ENCODE measurements at regions of chr7 and their contacts with region 1.

Region 1: DNA sequence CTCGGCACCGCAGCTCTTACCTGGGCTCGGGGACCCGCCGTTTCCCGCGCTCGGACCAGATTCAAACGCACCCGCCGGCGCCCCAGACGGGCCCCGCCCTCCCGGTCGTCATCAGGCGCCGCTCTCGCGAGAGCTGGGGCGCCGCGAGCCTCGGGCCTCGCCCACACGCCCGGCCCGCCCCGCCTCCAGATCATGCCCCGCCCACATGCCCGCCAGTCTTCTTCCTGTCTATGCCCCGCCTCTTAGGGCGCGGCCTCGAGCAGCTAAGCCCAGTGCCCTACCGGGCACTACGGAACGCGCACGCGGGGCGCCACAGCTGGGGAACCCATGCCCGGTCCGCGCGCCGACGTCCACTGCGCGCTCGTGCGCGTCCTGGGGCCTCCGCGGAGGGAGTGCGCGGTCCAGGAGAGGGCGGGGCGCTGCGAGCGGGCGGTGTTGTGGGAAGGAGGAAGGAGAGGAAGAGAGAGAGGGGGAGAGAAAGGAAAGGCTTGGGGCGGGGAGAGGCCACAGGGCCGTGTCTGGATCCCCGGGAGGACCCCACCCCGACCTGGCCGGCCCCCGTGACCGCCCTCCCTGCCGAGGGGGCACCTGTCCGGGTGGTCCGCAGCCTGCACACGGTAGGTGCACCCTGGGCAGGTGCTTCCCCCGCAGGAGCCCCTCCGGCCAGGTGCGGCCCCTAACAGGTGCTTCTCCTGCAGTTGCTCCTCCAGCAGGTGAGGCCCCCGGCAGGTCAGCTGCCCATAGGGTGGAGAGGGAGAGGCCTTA is at the start of gene NCAPG2:
- DNase-seq: peak; percentile 99 to 100 (median 100)
- ATAC-seq: peak; percentile 94
- H3K4me3 ChIP-seq: peak within 1 kb of the TSS; percentile 83
- H3K27ac ChIP-seq: peak within 1 kb of the TSS; percentile 96
- H3K4me1 ChIP-seq: peaks cover 31 to 37% of the 10 kb centered on the region in 2 experiments
- H3K27me3 ChIP-seq: no peaks in the 10 kb centered on the region
- CTCF ChIP-seq: peak in 1 of 3 experiments; percentile 30; a peak in 1 of 6 replicates
- EP300 ChIP-seq: no peak
- POLR2A ChIP-seq: peak; percentile 96
- RAD21 ChIP-seq: no peak; a peak in 1 of 4 replicates
- polyA plus RNA-seq, gene NCAPG2: 21.5 to 97.7 TPM

Region 2: DNA sequence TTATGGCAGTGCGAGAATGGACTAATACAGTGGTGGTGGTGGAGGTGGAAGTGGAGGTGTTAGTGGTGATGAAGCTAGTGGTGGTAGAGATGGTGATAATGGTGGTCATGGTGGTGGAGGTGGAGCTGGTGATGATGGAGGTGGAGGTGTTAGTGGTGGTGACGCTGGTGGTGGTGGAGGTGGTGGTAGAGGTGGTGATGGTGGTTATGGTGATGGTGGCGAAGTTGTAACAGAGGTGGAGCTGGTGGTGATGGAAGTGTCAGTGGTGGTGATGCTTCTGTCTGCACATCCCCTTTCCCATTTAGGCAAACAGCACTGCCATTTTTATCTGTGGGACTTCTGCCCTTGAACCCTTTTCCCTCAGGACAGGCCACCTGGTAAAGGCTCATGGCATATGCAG is 109.8 kb before region 1 on chr7:
- CTCF ChIA-PET with region 1: no interaction called
- POLR2A ChIA-PET with region 1: no interaction called
- in situ Hi-C with region 1: no loop called
- intact Hi-C with region 1: no loop called
- DNase-seq: no peak
- ATAC-seq: no peak
- H3K4me3 ChIP-seq: no peak overlapping the region
- H3K27ac ChIP-seq: no peak overlapping the region
- H3K4me1 ChIP-seq: no peaks in the 10 kb centered on the region
- H3K27me3 ChIP-seq: peaks cover 14 to 25% of the 10 kb centered on the region in 2 experiments; a peak in 4 of 5 replicates
- CTCF ChIP-seq: no peak
- EP300 ChIP-seq: no peak
- POLR2A ChIP-seq: no peak
- RAD21 ChIP-seq: no peak

Region 3: GRCh38 chr7:158609313-158609974 is 95.4 kb before region 1 on chr7:
- CTCF ChIA-PET with region 1: no interaction called
- POLR2A ChIA-PET with region 1: no interaction called
- in situ Hi-C with region 1: no loop called
- intact Hi-C with region 1: no loop called
- DNase-seq: peak in 2 of 4 experiments; percentile 42 to 50
- ATAC-seq: peak; percentile 17; the same call in 2 of the 3 replicates
- H3K4me3 ChIP-seq: no peak overlapping the region
- H3K27ac ChIP-seq: no peak overlapping the region
- H3K4me1 ChIP-seq: peaks cover 0 to under 1% of the 10 kb centered on the region in 2 experiments; a peak in 1 of 5 replicates
- H3K27me3 ChIP-seq: no peaks in the 10 kb centered on the region
- CTCF ChIP-seq: no peak
- EP300 ChIP-seq: no peak
- POLR2A ChIP-seq: no peak; the same call in 1 of the 2 replicates
- RAD21 ChIP-seq: no peak

Region 4: GRCh38 chr7:158655931-158656441 is 48.9 kb before region 1 on chr7:
- CTCF ChIA-PET with region 1: no interaction called
- POLR2A ChIA-PET with region 1: no interaction called
- in situ Hi-C with region 1: no loop called
- intact Hi-C with region 1: no loop called
- DNase-seq: no peak
- ATAC-seq: 0 out of 3 replicates have a peak, but pooled peaks have one; percentile 9
- H3K4me3 ChIP-seq: no peak overlapping the region
- H3K27ac ChIP-seq: no peak overlapping the region
- H3K4me1 ChIP-seq: peaks cover 0 to 3% of the 10 kb centered on the region in 2 experiments; a peak in 1 of 5 replicates
- H3K27me3 ChIP-seq: no peaks in the 10 kb centered on the region
- CTCF ChIP-seq: no peak
- EP300 ChIP-seq: no peak
- POLR2A ChIP-seq: no peak
- RAD21 ChIP-seq: no peak

Region 5: GRCh38 chr7:158685693-158686092 is 19.2 kb before region 1 on chr7:
- CTCF ChIA-PET with region 1: no interaction called
- POLR2A ChIA-PET with region 1: interaction called, 16 read pairs
- in situ Hi-C with region 1: no loop called
- intact Hi-C with region 1: no loop called
- DNase-seq: no peak
- ATAC-seq: no peak
- H3K4me3 ChIP-seq: no peak overlapping the region
- H3K27ac ChIP-seq: no peak overlapping the region
- H3K4me1 ChIP-seq: no peaks in the 10 kb centered on the region
- H3K27me3 ChIP-seq: no peaks in the 10 kb centered on the region
- CTCF ChIP-seq: no peak
- EP300 ChIP-seq: no peak
- POLR2A ChIP-seq: no peak
- RAD21 ChIP-seq: no peak

Region 6: GRCh38 chr7:158723266-158723665 is 18.4 kb after region 1 on chr7:
- CTCF ChIA-PET with region 1: no interaction called
- POLR2A ChIA-PET with region 1: interaction called, 11 read pairs
- in situ Hi-C with region 1: no loop called
- intact Hi-C with region 1: no loop called
- DNase-seq: no peak
- ATAC-seq: peak; percentile 9; the same call in 1 of the 3 replicates
- H3K4me3 ChIP-seq: no peak overlapping the region
- H3K27ac ChIP-seq: no peak overlapping the region
- H3K4me1 ChIP-seq: peaks cover 4 to 5% of the 10 kb centered on the region in 2 experiments; a peak in 4 of 5 replicates
- H3K27me3 ChIP-seq: peaks cover 0 to 5% of the 10 kb centered on the region in 2 experiments; a peak in 1 of 5 replicates
- CTCF ChIP-seq: no peak
- EP300 ChIP-seq: no peak
- POLR2A ChIP-seq: no peak
- RAD21 ChIP-seq: no peak

Region 7: GRCh38 chr7:158740013-158740656 is 35.2 kb after region 1 on chr7:
- CTCF ChIA-PET with region 1: no interaction called
- POLR2A ChIA-PET with region 1: interaction called, 4 read pairs
- in situ Hi-C with region 1: no loop called
- intact Hi-C with region 1: loop called (anchors 5 kb)
- DNase-seq: peak in 2 of 4 experiments; percentile 48 to 58
- ATAC-seq: peak; percentile 47
- H3K4me3 ChIP-seq: no peak overlapping the region
- H3K27ac ChIP-seq: peak overlapping the region; percentile 71
- H3K4me1 ChIP-seq: peaks cover 22 to 32% of the 10 kb centered on the region in 2 experiments; a peak in 4 of 5 replicates
- H3K27me3 ChIP-seq: no peaks in the 10 kb centered on the region
- CTCF ChIP-seq: peak in 1 of 3 experiments; percentile 8; a peak in 1 of 6 replicates
- EP300 ChIP-seq: no peak
- POLR2A ChIP-seq: no peak
- RAD21 ChIP-seq: peak; percentile 11 to 59; a peak in 2 of 4 replicates

Region 8: GRCh38 chr7:158781217-158781973 is 76.5 kb after region 1 on chr7:
- CTCF ChIA-PET with region 1: no interaction called
- POLR2A ChIA-PET with region 1: no interaction called
- in situ Hi-C with region 1: no loop called
- intact Hi-C with region 1: no loop called
- DNase-seq: no peak
- ATAC-seq: no peak
- H3K4me3 ChIP-seq: no peak overlapping the region
- H3K27ac ChIP-seq: no peak overlapping the region
- H3K4me1 ChIP-seq: peaks cover 0 to 11% of the 10 kb centered on the region in 2 experiments; a peak in 4 of 5 replicates
- H3K27me3 ChIP-seq: no peaks in the 10 kb centered on the region; a peak in 1 of 5 replicates
- CTCF ChIP-seq: no peak
- EP300 ChIP-seq: no peak
- POLR2A ChIP-seq: peak; percentile 35; the same call in 1 of the 2 replicates
- RAD21 ChIP-seq: no peak

Measured in K562 (cell line).